ENCODE measurements at regions of chr1 and their contacts with region 1.

Region 1: DNA sequence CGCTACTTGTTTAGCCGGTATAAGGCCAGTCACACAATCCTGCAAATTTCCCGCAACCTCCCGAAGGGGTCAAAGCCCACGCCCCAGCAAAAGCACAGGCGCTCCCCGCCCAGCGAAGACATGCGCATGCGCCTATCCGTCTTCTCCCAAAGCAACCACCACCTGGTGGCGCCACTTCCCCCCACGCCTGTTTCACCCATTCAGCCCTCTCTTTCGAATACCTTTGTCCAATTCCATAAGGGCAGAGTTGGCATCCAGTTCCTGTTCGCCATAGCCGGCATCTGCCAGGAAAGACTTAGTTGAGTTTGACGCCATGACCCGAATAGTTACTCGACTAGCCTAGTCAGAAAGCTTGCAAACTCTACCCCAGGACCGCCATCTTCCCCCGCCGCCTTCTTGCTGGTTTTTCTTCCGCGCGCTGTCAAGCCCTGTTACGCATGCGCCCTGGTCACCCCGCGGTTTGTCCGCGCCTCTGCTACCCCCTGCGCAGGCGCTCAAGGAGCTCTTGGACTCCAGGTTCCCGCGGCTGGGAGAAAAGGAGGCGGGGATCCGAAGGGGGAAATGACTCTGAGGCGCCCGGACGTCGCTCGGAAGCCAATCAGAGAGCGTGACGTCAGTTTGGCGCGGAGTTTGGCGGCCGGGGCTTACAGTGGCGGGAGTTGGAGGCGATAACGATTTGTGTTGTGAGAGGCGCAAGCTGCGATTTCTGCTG is at the starts of genes DTL and INTS7:
- DNase-seq: peak; percentile 99
- ATAC-seq: peak; percentile 83
- H3K4me3 Mint-ChIP-seq: peak within 1 kb of the TSS; percentile 85
- H3K27ac Mint-ChIP-seq: peak within 1 kb of the TSS; percentile 100
- H3K4me1 Mint-ChIP-seq: peaks cover 56% of the 10 kb centered on the region
- H3K27me3 Mint-ChIP-seq: no peaks in the 10 kb centered on the region
- total RNA-seq, gene DTL: 82.1 to 114 TPM
- total RNA-seq, gene INTS7: 23.7 to 28.6 TPM

Region 2: GRCh38 chr1:211578640-211579433 is 456.4 kb before region 1 on chr1 and contains the start of gene SLC30A1:
- CTCF ChIA-PET with region 1: no interaction called
- POLR2A ChIA-PET with region 1: interaction called, 4 read pairs
- intact Hi-C with region 1: loop called (anchors 1 to 5 kb)
- DNase-seq: peak; percentile 100
- ATAC-seq: peak; percentile 94
- H3K4me3 Mint-ChIP-seq: peak within 1 kb of the TSS; percentile 89
- H3K27ac Mint-ChIP-seq: peak within 1 kb of the TSS; percentile 85
- H3K4me1 Mint-ChIP-seq: peaks cover 31% of the 10 kb centered on the region
- H3K27me3 Mint-ChIP-seq: no peaks in the 10 kb centered on the region
- total RNA-seq, gene SLC30A1: 2.9 to 4.5 TPM

Region 3: DNA sequence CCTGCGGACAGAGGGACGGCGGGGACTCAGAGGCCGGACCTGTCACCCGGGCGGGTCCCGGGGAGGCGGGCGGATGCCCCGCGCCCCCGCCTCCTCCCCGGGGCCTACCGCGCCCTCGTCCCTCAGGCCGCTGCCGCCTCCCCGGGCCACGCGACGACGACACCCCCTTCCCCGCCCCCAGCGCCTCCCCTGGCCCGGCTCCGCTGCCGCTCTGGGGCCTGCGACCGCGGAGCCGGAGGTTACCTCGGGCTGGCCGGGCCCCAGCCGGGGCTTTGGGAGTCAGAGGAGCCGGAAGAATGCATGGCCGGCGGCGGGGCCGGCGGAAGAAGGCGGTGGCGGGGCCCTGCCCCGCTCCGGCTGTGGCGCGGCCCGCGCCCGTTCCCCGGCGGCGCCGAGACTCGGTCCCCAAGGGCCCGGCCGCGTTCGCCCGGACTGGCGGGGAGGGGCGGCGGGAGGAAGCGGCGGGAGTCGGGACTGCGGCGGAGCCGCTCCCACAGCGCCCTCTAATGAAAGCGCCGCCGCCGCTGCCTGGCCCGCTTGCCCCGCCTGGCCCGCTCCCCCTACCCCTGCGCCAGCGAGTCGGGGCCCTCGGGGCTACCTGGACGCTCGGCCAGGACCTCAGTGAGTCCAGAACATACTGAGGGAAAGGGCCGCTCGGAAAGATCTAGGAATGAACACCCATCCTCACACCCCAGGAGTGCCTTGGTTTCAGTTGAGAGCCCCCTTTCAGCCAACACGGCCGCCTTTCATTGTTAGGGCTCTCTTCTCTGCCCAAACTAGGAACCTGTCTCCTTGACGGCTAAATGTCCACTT is 204.7 kb before region 1 on chr1 and contains the start of gene LPGAT1:
- CTCF ChIA-PET with region 1: no interaction called
- POLR2A ChIA-PET with region 1: no interaction called
- intact Hi-C with region 1: loop called (anchors 1 to 5 kb)
- DNase-seq: peak; percentile 86
- ATAC-seq: peak; percentile 83
- H3K4me3 Mint-ChIP-seq: peak within 1 kb of the TSS; percentile 82
- H3K27ac Mint-ChIP-seq: peak within 1 kb of the TSS; percentile 85
- H3K4me1 Mint-ChIP-seq: peaks cover 57% of the 10 kb centered on the region
- H3K27me3 Mint-ChIP-seq: no peaks in the 10 kb centered on the region
- total RNA-seq, gene LPGAT1: 21.7 to 24.9 TPM

Region 4: DNA sequence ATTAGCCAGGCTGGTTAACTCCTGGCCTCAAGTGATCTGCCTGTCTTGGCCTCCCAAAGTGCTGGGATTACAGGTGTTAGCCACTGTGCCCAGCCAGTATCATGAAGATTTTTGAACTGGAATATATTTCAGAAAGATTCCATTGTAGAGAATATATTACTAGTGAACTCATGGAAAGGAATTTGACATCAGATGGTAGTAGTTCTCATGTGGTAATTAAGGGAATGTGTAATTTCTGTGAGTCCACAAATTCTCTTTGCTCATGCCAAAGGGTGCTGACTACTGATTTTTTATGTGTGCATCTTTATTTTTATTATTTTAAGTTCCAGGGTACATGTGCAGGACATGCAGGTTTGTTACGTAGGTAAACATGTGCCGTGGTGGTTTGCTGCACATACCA is 10.7 kb after region 1 on chr1:
- CTCF ChIA-PET with region 1: interaction called, 20 read pairs
- POLR2A ChIA-PET with region 1: interaction called, 3 read pairs
- intact Hi-C with region 1: no loop called
- DNase-seq: no peak
- ATAC-seq: no peak
- H3K4me3 Mint-ChIP-seq: no peak overlapping the region
- H3K27ac Mint-ChIP-seq: no peak overlapping the region
- H3K4me1 Mint-ChIP-seq: peaks cover 4% of the 10 kb centered on the region
- H3K27me3 Mint-ChIP-seq: peaks cover under 1% of the 10 kb centered on the region

Region 5: DNA sequence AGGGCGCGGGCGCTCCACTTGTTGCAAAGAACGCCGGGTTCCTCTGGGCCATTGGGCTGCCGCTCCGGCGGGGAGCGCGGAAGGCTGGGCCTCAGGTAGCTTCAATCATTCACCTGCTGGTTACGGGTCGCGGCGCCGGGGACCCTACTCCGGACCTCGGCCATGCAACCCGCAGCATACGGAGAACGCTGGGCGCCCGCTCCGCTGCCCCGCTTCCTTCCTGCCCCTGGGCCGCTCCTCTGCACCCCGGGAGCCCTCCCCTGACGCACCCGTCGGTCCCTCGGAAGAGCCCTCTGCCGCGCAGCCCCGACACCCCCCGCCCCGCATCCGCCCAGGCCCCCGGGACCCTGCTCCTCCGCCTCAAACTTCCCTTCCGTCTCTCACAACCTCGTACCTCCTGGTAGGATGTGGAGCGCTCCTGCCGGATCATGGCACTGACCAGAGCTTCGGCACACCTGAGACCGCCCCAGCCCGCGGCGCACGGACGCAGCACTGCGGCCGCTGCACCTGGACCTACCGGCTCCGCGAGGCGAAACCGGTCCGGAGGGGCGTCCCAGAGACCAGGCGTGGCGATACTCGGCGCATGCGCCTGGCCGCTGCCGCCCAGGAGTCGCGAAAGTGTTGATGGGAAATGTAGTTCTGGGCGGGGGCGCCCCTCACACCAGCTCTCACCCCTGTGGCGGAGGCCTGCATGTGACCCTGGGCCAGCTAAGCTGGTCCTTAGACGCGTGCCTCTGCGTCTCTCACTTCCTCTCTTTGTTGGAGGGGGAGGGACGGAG is 379.2 kb after region 1 on chr1 and contains the start of gene PACC1:
- CTCF ChIA-PET with region 1: interaction called, 3 read pairs
- POLR2A ChIA-PET with region 1: no interaction called
- intact Hi-C with region 1: loop called in 1 of 2 experiments (anchors 1 kb)
- DNase-seq: peak; percentile 93
- ATAC-seq: peak; percentile 98
- H3K4me3 Mint-ChIP-seq: peak within 1 kb of the TSS; percentile 93
- H3K27ac Mint-ChIP-seq: peak within 1 kb of the TSS; percentile 92
- H3K4me1 Mint-ChIP-seq: peaks cover 22% of the 10 kb centered on the region
- H3K27me3 Mint-ChIP-seq: no peaks in the 10 kb centered on the region
- total RNA-seq, gene PACC1: 9.2 to 13.8 TPM

Region 6: GRCh38 chr1:212791676-212792395 is 756.6 kb after region 1 on chr1 and contains the starts of genes NSL1 and TATDN3:
- CTCF ChIA-PET with region 1: no interaction called
- POLR2A ChIA-PET with region 1: no interaction called
- intact Hi-C with region 1: loop called in 1 of 2 experiments (anchors 2 kb)
- DNase-seq: peak; percentile 95
- ATAC-seq: peak; percentile 89
- H3K4me3 Mint-ChIP-seq: peak within 1 kb of the TSS; percentile 99
- H3K27ac Mint-ChIP-seq: peak within 1 kb of the TSS; percentile 94
- H3K4me1 Mint-ChIP-seq: peaks cover 43% of the 10 kb centered on the region
- H3K27me3 Mint-ChIP-seq: no peaks in the 10 kb centered on the region
- total RNA-seq, gene NSL1: 39.2 to 40.9 TPM
- total RNA-seq, gene TATDN3: 13.8 to 15.2 TPM